ENCODE measurements at regions of chr7 and their contacts with region 1.

Region 1: GRCh38 chr7:50206453-50207250 is 97.9 kb upstream of the IKZF1 start:
- DNase-seq: no peak
- ATAC-seq: peak in 2 of 4 donors; percentile 44 to 52
- H3K4me3 ChIP-seq: no peak overlapping the region
- H3K27ac ChIP-seq: no peak overlapping the region
- H3K4me1 ChIP-seq: no peaks in the 10 kb centered on the region
- H3K27me3 ChIP-seq: no peaks in the 10 kb centered on the region
- CTCF ChIP-seq: no peak

Region 2: DNA sequence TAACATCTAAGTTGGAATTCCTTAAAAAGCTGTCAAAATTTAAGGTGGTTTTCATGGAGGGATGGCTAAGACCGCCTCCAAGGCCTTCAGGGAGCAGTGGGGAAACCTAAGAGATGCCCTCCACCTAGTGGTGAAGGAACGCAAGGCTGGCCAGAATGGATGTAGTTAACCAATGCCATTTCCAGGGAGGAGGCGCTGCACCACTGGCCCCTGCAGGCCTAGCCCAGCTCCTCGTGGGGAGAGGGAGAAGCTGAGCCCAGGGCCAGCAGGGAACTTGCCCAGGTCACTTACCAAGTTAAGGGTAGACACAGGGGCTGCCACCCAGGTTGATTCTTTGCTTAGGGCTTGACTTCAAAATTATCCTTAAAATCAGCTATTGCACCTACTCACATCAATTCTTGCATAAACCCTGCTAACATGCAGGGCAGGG is 211.4 kb after region 1 on chr7:
- intact Hi-C with region 1: loop called in 1 of 3 experiments (anchors 5 kb)
- DNase-seq: peak in 5 of 6 donors; percentile 50 to 73 (median 55)
- ATAC-seq: peak; percentile 86 to 98 (median 95)
- H3K4me3 ChIP-seq: no peak overlapping the region
- H3K27ac ChIP-seq: no peak overlapping the region
- H3K4me1 ChIP-seq: no peaks in the 10 kb centered on the region
- H3K27me3 ChIP-seq: no peaks in the 10 kb centered on the region
- CTCF ChIP-seq: peak; percentile 52 to 81 (median 72)

Region 3: GRCh38 chr7:51154201-51154600 is 947.5 kb after region 1 on chr7:
- intact Hi-C with region 1: loop called in 1 of 3 experiments (anchors 10 kb)
- DNase-seq: no peak
- ATAC-seq: no peak
- H3K4me3 ChIP-seq: no peak overlapping the region
- H3K27ac ChIP-seq: no peak overlapping the region
- H3K4me1 ChIP-seq: no peaks in the 10 kb centered on the region
- H3K27me3 ChIP-seq: no peaks in the 10 kb centered on the region
- CTCF ChIP-seq: no peak

Region 4: GRCh38 chr7:51162724-51163329 is 956.2 kb after region 1 on chr7:
- intact Hi-C with region 1: loop called in 2 of 3 experiments (anchors 10 kb)
- DNase-seq: peak in 5 of 6 donors; percentile 55 to 86 (median 67)
- ATAC-seq: peak; percentile 82 to 95 (median 92)
- H3K4me3 ChIP-seq: no peak overlapping the region
- H3K27ac ChIP-seq: no peak overlapping the region
- H3K4me1 ChIP-seq: peaks cover 0 to 4% (median 0%) of the 10 kb centered on the region in 3 donors
- H3K27me3 ChIP-seq: no peaks in the 10 kb centered on the region
- CTCF ChIP-seq: peak; percentile 65 to 76 (median 70)